ENCODE measurements at regions of chr6 and their contacts with region 1.

Region 1: GRCh38 chr6:36123257-36124139 is 6.8 kb upstream of the MAPK13 start:
- DNase-seq: peak; percentile 95
- ATAC-seq: peak; percentile 85
- H3K4me3 Mint-ChIP-seq: no peak overlapping the region
- H3K27ac Mint-ChIP-seq: peak overlapping the region; percentile 71
- H3K4me1 Mint-ChIP-seq: peaks cover 84% of the 10 kb centered on the region
- H3K27me3 Mint-ChIP-seq: no peaks in the 10 kb centered on the region
- CTCF ChIP-seq: peak; percentile 41

Region 2: GRCh38 chr6:36196880-36197548 is 73.5 kb after region 1 on chr6:
- CTCF ChIA-PET with region 1: interaction called, 10 read pairs
- POLR2A ChIA-PET with region 1: interaction called, 4 read pairs
- intact Hi-C with region 1: loop called (anchors 5 kb)
- DNase-seq: peak; percentile 100
- ATAC-seq: peak; percentile 96
- H3K4me3 Mint-ChIP-seq: peak overlapping the region; percentile 87
- H3K27ac Mint-ChIP-seq: peak overlapping the region; percentile 94
- H3K4me1 Mint-ChIP-seq: peaks cover 56% of the 10 kb centered on the region
- H3K27me3 Mint-ChIP-seq: no peaks in the 10 kb centered on the region
- CTCF ChIP-seq: no peak

Region 3: GRCh38 chr6:36360241-36361054 is 236.9 kb after region 1 on chr6:
- CTCF ChIA-PET with region 1: interaction called, 7 read pairs
- POLR2A ChIA-PET with region 1: no interaction called
- intact Hi-C with region 1: loop called (anchors 10 kb)
- DNase-seq: peak; percentile 84
- ATAC-seq: peak; percentile 93
- H3K4me3 Mint-ChIP-seq: no peak overlapping the region
- H3K27ac Mint-ChIP-seq: no peak overlapping the region
- H3K4me1 Mint-ChIP-seq: peaks cover 12% of the 10 kb centered on the region
- H3K27me3 Mint-ChIP-seq: no peaks in the 10 kb centered on the region
- CTCF ChIP-seq: peak; percentile 79

Measured in activated CD8-positive, alpha-beta T cell treated with anti-CD3 and anti-CD28 coated beads for 36 hours (primary cell).